ENCODE measurements at regions of chr10 and their contacts with region 1.

Region 1: DNA sequence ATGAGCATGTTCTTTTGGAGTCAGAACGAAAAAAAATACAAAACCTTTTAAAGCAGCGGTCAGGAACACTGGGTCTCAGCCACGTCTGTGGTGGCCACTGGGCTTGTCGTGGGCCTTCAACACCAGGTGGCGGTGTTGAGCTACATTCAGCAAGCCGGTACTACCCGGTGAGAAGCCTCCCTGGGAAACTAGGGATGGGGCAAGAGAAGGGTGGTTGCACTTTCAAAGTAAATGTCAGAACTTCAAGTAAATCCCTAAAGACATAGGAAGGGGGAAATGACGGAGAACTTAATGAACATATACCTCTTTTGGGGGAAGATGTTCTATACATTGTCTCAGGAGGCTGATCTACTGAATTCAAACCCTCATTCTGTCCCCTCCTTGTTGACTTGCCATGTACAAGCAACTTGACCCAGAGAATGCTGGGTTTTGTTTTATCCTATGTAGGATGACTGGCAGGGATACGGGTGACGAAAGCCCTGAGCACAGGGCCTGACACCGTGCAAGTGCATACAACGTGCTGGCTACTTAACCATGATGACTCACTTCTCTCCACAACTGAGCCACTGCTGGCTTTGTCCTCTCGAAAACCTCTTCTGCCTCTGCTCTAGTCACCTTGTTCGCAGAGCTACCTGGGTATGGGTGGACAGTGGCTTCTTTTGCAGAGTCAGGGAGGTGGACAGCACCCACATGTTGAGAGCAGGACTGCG is 49.0 kb upstream of the BAMBI start:
- DNase-seq: peak; percentile 86
- ATAC-seq: peak; percentile 87
- H3K4me3 Mint-ChIP-seq: no peak overlapping the region
- H3K27ac Mint-ChIP-seq: no peak overlapping the region
- H3K4me1 Mint-ChIP-seq: peaks cover 5% of the 10 kb centered on the region
- H3K27me3 Mint-ChIP-seq: peaks cover 12% of the 10 kb centered on the region

Region 2: GRCh38 chr10:28432210-28432676 is 196.1 kb before region 1 on chr10:
- CTCF ChIA-PET with region 1: interaction called, 3 read pairs
- POLR2A ChIA-PET with region 1: no interaction called
- intact Hi-C with region 1: loop called (anchors 5 to 10 kb)
- DNase-seq: peak; percentile 26
- ATAC-seq: no peak
- H3K4me3 Mint-ChIP-seq: peak overlapping the region; percentile 11
- H3K27ac Mint-ChIP-seq: no peak overlapping the region
- H3K4me1 Mint-ChIP-seq: peaks cover 6% of the 10 kb centered on the region
- H3K27me3 Mint-ChIP-seq: peaks cover 4% of the 10 kb centered on the region

Region 3: GRCh38 chr10:28663576-28664313 is 35.4 kb after region 1 on chr10:
- CTCF ChIA-PET with region 1: interaction called, 5 read pairs
- POLR2A ChIA-PET with region 1: no interaction called
- intact Hi-C with region 1: loop called in 1 of 2 experiments (anchors 2 kb)
- DNase-seq: peak; percentile 82
- ATAC-seq: peak; percentile 75
- H3K4me3 Mint-ChIP-seq: no peak overlapping the region
- H3K27ac Mint-ChIP-seq: no peak overlapping the region
- H3K4me1 Mint-ChIP-seq: peaks cover 7% of the 10 kb centered on the region
- H3K27me3 Mint-ChIP-seq: peaks cover 33% of the 10 kb centered on the region

Region 4: DNA sequence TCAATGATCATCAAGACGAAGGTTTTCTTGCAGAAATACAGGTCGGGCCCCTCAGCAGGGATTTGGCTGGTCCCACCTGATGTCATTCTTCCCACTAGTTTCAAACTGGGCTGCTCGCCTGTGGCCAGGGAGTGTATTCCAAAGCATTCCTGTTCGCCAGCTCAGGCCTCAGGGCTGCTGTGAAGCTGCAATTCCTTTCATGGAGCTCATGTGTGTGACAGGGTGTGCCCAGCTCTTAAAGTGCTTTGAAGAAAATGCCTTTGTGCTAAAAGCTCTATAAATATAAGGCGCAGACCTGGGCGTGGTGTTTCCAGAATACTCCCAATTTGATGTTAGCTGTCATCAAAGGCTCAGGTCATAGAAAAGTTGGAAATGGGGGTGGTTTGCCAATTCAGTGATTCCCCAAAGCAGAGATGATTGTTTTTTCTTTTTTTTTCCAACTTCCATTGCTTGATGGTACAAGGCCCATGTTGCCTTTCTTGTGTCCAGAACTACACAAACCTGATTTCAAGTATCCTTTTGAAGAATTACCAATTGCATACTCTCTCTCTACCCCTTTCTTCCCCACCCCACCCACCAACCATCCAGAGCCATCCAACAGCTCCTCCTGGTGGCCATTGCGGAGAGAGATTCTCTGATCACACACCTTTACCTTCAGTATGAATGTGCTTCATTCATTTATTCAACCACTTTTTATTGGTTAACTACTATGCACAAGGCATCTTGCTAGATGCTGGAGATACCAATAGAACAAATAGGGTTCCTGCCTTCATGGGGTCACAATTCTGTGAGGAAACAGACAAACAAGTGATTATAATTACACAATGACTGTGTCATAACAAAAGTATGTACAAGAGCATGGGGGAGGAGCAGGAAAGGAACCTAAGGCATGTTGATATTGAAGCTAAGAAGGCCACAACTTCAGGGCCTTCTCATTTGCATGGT is 363.3 kb after region 1 on chr10:
- CTCF ChIA-PET with region 1: interaction called, 9 read pairs
- POLR2A ChIA-PET with region 1: no interaction called
- intact Hi-C with region 1: loop called in 1 of 2 experiments (anchors 1 kb)
- DNase-seq: peak; percentile 66
- ATAC-seq: peak; percentile 42
- H3K4me3 Mint-ChIP-seq: no peak overlapping the region
- H3K27ac Mint-ChIP-seq: no peak overlapping the region
- H3K4me1 Mint-ChIP-seq: peaks cover 5% of the 10 kb centered on the region
- H3K27me3 Mint-ChIP-seq: peaks cover 10% of the 10 kb centered on the region

Region 5: DNA sequence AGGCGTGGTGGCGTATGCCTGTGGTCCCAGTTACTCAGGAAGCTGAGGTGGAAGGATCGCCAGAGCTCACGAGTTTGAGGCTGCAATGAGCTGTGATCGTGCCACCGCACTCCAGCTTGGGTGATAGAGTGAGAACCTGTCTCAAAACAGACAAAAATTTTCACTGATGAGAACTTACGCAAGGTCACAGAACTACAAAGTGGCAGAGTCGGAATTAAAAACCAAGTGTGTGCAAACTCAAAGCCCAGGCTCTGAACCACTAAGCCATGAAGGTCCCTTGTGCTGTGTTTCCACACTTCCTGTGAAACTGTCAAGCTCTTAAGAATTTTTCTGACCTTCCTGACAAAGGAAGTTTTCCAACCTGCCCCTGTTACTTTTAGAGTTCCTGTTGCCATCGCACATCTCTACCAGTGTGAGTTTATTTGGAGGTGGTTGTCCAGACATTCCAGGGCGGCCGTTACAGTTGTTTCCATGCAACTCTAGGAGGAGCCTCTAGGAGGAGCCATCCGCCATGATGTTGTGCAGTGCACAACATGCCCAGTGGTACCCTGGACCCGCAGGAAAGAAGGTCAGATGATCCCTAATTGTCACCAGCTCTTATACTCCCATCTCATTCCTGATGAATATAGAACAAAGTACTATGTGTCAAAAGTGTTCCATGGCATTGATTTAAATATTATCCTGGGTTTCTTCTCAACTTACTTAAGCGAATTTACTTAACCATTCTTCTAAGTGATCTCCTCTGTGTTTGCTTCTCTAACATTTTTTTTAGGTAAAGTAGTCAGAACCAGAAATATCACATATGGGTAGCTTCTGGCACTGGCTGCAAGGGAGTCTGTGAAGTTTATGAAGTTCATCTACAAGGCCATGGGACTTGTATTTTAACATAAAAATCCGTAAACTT is 611.5 kb after region 1 on chr10:
- CTCF ChIA-PET with region 1: no interaction called
- POLR2A ChIA-PET with region 1: no interaction called
- intact Hi-C with region 1: no loop called
- DNase-seq: peak; percentile 8
- ATAC-seq: no peak
- H3K4me3 Mint-ChIP-seq: no peak overlapping the region
- H3K27ac Mint-ChIP-seq: no peak overlapping the region
- H3K4me1 Mint-ChIP-seq: no peaks in the 10 kb centered on the region
- H3K27me3 Mint-ChIP-seq: peaks cover 5% of the 10 kb centered on the region

Region 6: DNA sequence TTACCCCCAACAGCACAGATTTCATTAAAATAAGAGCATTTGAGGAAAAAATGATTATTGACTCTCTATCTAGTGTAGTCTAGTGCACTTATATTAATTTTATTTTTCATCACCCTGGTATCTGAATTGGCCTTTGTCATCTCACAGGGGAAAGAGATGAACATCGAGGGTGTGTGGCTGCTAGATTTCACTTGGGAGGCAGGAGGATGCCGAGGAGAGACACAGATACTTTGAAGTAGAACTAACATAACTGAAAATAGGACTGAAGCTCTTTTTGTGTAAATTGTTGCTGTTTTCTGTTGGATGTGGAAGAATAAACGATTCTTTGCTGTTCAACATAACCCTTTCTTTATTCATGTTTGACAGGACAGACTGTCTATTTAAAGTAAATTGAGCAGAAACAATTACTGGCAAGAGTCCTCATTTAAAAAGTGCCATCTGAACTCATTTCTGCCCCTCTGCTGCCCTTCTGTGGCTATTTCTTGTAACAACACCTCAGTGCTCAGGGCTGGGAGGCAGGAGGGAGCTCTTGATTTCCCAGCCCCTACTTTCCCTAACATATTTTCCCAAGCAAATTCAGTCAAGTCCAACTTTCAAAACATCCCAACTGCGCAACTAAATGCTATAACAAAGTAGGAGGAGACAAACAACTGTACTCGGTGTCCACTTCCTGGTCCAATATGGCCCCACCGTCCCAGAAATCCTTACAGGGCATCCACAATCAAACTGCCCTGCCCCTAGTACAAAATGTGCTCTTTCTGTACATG is 676.1 kb after region 1 on chr10:
- CTCF ChIA-PET with region 1: interaction called, 5 read pairs
- POLR2A ChIA-PET with region 1: no interaction called
- intact Hi-C with region 1: loop called in 1 of 2 experiments (anchors 1 kb)
- DNase-seq: peak; percentile 49
- ATAC-seq: no peak
- H3K4me3 Mint-ChIP-seq: no peak overlapping the region
- H3K27ac Mint-ChIP-seq: no peak overlapping the region
- H3K4me1 Mint-ChIP-seq: peaks cover 5% of the 10 kb centered on the region
- H3K27me3 Mint-ChIP-seq: peaks cover 28% of the 10 kb centered on the region

Measured in activated CD4-positive, alpha-beta T cell treated with anti-CD3 and anti-CD28 coated beads for 36 hours (primary cell).